Panc1 (cell line): ENCODE measurements at regions of chr15 and their contacts with region 1.

Region 1: DNA sequence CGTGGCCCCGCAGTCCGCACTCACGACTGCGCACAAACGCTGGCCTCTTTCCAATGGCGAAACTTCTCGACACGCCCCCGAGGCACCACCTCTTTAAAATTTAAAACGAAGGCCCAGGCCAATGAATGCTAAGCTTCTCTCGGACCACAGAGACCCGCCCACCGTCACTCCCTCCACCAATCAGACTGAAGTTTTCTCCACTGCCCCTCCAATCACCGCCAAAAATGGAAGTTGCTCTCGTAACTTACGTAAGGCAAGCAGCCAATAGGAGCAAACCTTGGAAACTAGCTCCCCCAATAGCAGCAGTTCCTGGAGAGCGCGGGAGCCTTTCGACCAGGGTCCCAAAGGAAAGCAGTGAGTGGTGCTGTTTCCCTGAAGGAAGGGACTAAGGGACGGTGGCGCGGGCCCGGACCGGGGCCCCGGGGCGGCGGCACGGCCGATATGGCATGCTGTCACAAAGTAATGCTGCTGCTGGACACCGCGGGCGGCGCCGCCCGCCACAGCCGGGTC is at the start of gene TICRR:
- DNase-seq: peak; percentile 99
- ATAC-seq: peak; percentile 97
- H3K4me3 ChIP-seq: peak within 1 kb of the TSS; percentile 73 to 76
- H3K27ac ChIP-seq: peak within 1 kb of the TSS; percentile 86
- H3K4me1 ChIP-seq: peaks cover 12% of the 10 kb centered on the region
- H3K27me3 ChIP-seq: no peaks in the 10 kb centered on the region
- CTCF ChIP-seq: no peak
- total RNA-seq, gene TICRR: 20.5 TPM

Region 2: DNA sequence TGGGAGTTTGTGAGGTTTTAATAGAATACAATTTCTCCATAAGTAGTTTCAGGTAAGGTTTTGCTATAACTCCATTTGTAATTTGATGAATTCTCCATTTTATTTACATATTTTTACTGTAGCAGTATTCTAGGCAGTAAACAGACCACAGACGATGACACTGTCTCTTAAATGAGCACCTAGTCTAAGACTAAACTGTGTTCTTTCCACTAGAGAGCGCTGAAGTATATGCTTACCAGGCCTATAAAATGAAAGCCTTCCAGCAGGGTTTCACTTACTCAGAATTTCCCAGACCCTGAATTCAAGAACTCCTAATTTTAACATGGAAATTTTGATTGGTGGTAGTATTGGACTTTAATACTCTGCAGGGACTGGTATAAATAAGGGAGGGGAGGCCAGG is 282.2 kb before region 1 on chr15:
- CTCF ChIA-PET with region 1: no interaction called
- POLR2A ChIA-PET with region 1: no interaction called
- in situ Hi-C with region 1: no loop called
- intact Hi-C with region 1: no loop called
- DNase-seq: no peak
- ATAC-seq: no peak
- H3K4me3 ChIP-seq: no peak overlapping the region
- H3K27ac ChIP-seq: no peak overlapping the region
- H3K4me1 ChIP-seq: no peaks in the 10 kb centered on the region
- H3K27me3 ChIP-seq: no peaks in the 10 kb centered on the region
- CTCF ChIP-seq: no peak; the same call in 1 of the 2 replicates

Region 3: DNA sequence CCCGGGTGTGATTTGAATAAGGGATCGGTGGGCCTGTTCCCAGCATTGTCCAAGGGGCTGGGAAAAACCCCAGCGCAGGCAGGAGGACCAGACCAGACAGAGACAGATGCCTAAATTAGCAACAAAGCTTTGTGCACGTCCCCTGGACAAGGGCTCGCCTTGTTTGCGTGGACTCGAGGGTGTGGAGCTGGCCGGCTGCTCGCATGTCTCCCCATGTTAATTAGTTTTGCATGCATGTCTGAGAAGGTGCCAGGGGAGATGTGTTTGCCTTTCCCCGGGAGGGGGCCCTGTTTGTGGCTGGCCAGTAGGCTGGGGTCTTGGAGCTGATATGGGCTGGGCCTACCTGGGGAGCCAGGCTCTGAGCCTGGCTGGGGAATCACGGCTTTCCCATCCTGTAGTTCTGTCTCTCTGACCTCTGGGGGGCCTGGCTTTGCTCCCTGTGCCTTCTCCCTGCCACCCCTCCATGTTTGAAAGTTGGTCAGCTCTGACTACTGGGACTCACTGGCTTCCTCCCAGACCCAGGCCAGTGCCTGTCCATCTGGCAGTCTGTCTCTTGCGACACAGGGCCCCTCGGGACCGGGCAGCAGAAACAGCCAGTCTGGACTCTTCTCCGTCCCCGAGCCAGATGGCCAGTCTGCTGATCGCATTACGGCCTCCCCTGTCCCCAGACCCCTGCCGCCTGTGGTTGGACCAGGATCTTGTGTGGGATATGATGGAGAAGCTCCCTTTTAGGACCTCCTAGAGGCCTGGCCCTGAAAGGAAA is 185.2 kb before region 1 on chr15:
- CTCF ChIA-PET with region 1: interaction called, 11 read pairs
- POLR2A ChIA-PET with region 1: no interaction called
- in situ Hi-C with region 1: no loop called
- intact Hi-C with region 1: no loop called
- DNase-seq: no peak
- ATAC-seq: no peak
- H3K4me3 ChIP-seq: no peak overlapping the region
- H3K27ac ChIP-seq: no peak overlapping the region
- H3K4me1 ChIP-seq: no peaks in the 10 kb centered on the region
- H3K27me3 ChIP-seq: no peaks in the 10 kb centered on the region
- CTCF ChIP-seq: no peak

Region 4: GRCh38 chr15:89457097-89457496 is 118.1 kb before region 1 on chr15:
- CTCF ChIA-PET with region 1: no interaction called
- POLR2A ChIA-PET with region 1: no interaction called
- in situ Hi-C with region 1: no loop called
- intact Hi-C with region 1: no loop called
- DNase-seq: no peak
- ATAC-seq: peak; percentile 64; the same call in 1 of the 2 replicates
- H3K4me3 ChIP-seq: no peak overlapping the region
- H3K27ac ChIP-seq: no peak overlapping the region
- H3K4me1 ChIP-seq: no peaks in the 10 kb centered on the region
- H3K27me3 ChIP-seq: no peaks in the 10 kb centered on the region
- CTCF ChIP-seq: no peak

Region 5: DNA sequence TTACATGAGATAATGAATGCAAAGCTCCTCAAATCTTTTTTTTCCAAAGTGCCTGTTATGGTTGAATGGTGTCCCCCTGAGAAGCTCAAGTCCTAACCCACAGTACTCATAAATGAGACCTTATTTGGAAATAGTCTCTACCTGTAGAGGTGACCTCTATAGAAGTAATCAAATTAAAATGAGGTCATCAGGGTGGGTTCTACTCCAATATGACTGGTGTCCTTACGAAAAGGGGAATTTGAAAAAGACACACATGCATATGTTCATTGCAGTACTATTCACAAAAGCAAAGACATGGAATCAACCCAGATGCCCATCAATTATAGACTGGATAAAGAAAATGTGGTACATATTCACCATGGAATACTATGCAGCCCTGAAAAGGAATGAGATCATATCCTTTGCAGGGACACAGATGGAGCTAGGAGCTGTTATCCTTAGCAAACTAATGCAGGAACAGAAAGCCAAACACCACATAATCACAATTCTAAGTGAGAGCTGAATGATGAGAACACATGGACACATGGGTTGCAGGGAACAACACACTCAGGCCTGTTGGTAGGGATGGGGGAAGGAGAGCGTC is 24.9 kb before region 1 on chr15:
- CTCF ChIA-PET with region 1: no interaction called
- POLR2A ChIA-PET with region 1: interaction called, 10 read pairs
- in situ Hi-C with region 1: no loop called
- intact Hi-C with region 1: no loop called
- DNase-seq: no peak
- ATAC-seq: no peak
- H3K4me3 ChIP-seq: no peak overlapping the region
- H3K27ac ChIP-seq: no peak overlapping the region
- H3K4me1 ChIP-seq: no peaks in the 10 kb centered on the region
- H3K27me3 ChIP-seq: no peaks in the 10 kb centered on the region
- CTCF ChIP-seq: no peak